PC-9 (cell line): ENCODE measurements at regions of chr11 and their contacts with region 1.

Region 1: GRCh38 chr11:123430721-123431497 is 840 bp downstream of the GRAMD1B start:
- DNase-seq: peak; percentile 33 to 55
- H3K4me3 ChIP-seq: peak overlapping the region; percentile 65
- H3K27ac ChIP-seq: peak overlapping the region; percentile 53
- H3K4me1 ChIP-seq: peaks cover 30% of the 10 kb centered on the region
- H3K27me3 ChIP-seq: no peaks in the 10 kb centered on the region
- CTCF ChIP-seq: no peak

Region 2: GRCh38 chr11:123407130-123407995 is 23.5 kb before region 1 on chr11:
- CTCF ChIA-PET with region 1: no interaction called
- POLR2A ChIA-PET with region 1: interaction called, 23 read pairs
- intact Hi-C with region 1: no loop called
- DNase-seq: peak; percentile 55 to 60
- H3K4me3 ChIP-seq: no peak overlapping the region
- H3K27ac ChIP-seq: no peak overlapping the region
- H3K4me1 ChIP-seq: no peaks in the 10 kb centered on the region
- H3K27me3 ChIP-seq: no peaks in the 10 kb centered on the region
- CTCF ChIP-seq: peak; percentile 88